CD4-positive, alpha-beta memory T cell (primary cell): ENCODE measurements at regions of chr17 and their contacts with region 1.

Region 1: GRCh38 chr17:19992803-19993713 is 15.4 kb upstream of the AKAP10 start:
- DNase-seq: peak; percentile 74 to 77 (median 75)
- H3K4me3 ChIP-seq: no peak overlapping the region
- H3K4me3 Mint-ChIP-seq: peak overlapping the region in 2 of 8 donors; percentile 25 to 55
- H3K27ac ChIP-seq: no peak overlapping the region
- H3K27ac Mint-ChIP-seq: peak overlapping the region in 3 of 7 donors; percentile 4 to 51 (median 29)
- H3K4me1 ChIP-seq: peaks cover 3% of the 10 kb centered on the region
- H3K4me1 Mint-ChIP-seq: peaks cover 2 to 6% (median 4%) of the 10 kb centered on the region in 4 donors
- H3K27me3 ChIP-seq: no peaks in the 10 kb centered on the region
- H3K27me3 Mint-ChIP-seq: peaks cover 9 to 10% of the 10 kb centered on the region in 2 donors

Region 2: DNA sequence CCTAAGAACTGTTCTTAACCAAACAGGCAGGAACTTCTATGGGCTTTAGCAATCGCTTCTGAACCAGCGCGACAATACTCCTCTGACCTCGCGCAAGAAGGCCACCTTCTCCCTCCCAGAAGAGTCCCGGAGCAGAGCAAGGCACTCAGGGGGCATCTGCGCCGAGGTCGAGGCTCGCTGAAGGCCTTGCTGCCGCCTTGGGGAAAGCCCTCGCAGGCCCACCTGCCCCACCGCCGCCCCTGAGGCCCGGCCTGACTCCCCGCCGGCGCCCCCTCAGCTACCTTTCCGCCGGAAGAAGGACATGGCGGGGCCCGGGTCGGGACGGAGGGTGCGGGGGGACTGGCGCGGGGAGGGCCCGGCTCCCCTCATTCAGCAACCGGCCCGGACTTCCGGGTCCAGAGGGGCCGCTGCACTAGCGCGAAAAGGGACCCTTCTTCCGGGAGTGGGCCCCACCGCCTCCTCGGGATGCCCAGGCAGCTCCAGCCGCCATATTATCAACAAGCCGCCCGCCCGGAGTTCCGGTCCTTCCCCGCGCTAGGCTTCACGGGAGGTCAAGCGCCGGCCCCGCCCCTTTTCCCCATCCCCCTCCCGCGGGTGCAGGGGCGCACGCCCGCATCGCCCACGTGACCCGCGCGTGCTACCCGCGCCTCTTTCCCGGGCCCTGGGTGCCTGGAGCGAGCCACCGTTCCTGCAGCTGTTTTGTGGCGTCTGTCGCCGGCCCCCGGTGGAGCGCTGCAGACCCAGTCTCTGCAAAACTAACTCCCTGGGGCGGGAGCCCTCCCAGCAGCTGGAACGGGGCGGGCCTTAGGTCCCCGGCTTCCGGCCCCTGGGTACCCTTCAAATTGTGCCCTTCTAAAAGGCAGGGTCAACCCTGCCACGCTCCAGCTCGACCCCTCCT is 15.5 kb before region 1 on chr17 and contains the start of gene AKAP10:
- CTCF ChIA-PET with region 1: interaction called, 12 read pairs
- POLR2A ChIA-PET with region 1: interaction called, 4 read pairs
- intact Hi-C with region 1: no loop called
- DNase-seq: peak; percentile 86 to 91 (median 88)
- H3K4me3 ChIP-seq: peak within 1 kb of the TSS; percentile 71 to 87
- H3K4me3 Mint-ChIP-seq: peak within 1 kb of the TSS; percentile 94 to 99 (median 96)
- H3K27ac ChIP-seq: peak within 1 kb of the TSS; percentile 93
- H3K27ac Mint-ChIP-seq: peak within 1 kb of the TSS; percentile 95 to 98 (median 97)
- H3K4me1 ChIP-seq: peaks cover 49% of the 10 kb centered on the region
- H3K4me1 Mint-ChIP-seq: peaks cover 29 to 55% (median 44%) of the 10 kb centered on the region in 4 donors
- H3K27me3 ChIP-seq: no peaks in the 10 kb centered on the region
- H3K27me3 Mint-ChIP-seq: no peaks in the 10 kb centered on the region
- total RNA-seq, gene AKAP10: 58.3 to 72.1 TPM

Region 3: DNA sequence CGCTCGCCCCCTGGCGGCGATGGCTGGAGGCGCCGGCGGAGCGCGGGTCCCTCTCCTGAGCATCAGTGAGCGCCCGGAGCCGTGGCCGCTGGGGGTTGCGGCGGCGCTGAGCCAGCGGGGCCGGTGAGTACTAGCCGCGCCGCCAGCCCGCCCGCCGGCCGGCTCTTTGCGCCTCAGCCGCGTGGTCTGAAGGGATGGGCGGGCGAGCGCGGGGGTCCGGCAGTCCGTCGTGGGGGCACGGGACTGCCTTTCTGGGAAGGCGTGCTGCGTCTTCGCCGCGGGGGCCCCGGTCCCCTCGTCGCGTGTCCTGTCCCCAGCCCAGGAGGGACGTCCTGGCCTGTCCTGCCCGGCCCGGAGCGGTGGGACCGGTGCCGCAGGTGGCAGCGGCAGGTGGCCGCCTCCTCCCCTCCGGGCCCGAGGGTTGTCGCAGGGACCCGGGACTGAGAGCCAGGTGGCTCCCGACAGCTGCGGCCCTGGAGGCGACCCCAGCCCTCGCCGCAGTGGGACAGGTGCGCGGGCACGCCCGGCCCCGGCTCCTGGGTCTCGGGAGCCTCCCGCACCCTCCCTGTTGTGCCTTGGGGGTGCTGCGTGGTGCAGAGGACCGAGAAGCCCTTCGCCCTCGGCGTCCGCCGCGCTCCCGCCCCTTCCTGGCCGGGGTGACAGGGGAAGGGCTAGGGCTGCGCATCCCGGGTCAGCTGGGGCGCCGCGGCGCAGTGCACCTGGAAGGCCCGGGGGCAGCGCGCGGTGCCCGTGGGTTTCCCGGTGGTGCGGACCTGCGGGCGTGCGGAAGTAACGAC is 16.4 kb after region 1 on chr17 and contains the start of gene SPECC1:
- CTCF ChIA-PET with region 1: interaction called, 73 read pairs
- POLR2A ChIA-PET with region 1: interaction called, 4 read pairs
- intact Hi-C with region 1: loop called (anchors 1 kb)
- DNase-seq: peak; percentile 78 to 91 (median 85)
- H3K4me3 ChIP-seq: peak within 1 kb of the TSS; percentile 65 to 66
- H3K4me3 Mint-ChIP-seq: peak within 1 kb of the TSS; percentile 91 to 98 (median 93)
- H3K27ac ChIP-seq: peak within 1 kb of the TSS; percentile 33
- H3K27ac Mint-ChIP-seq: peak within 1 kb of the TSS; percentile 29 to 92 (median 84)
- H3K4me1 ChIP-seq: peaks cover 14% of the 10 kb centered on the region
- H3K4me1 Mint-ChIP-seq: peaks cover 9 to 17% (median 10%) of the 10 kb centered on the region in 4 donors
- H3K27me3 ChIP-seq: peaks cover 7% of the 10 kb centered on the region
- H3K27me3 Mint-ChIP-seq: peaks cover 19 to 24% of the 10 kb centered on the region in 2 donors
- total RNA-seq, gene SPECC1: 12.8 to 13.4 TPM

Region 4: DNA sequence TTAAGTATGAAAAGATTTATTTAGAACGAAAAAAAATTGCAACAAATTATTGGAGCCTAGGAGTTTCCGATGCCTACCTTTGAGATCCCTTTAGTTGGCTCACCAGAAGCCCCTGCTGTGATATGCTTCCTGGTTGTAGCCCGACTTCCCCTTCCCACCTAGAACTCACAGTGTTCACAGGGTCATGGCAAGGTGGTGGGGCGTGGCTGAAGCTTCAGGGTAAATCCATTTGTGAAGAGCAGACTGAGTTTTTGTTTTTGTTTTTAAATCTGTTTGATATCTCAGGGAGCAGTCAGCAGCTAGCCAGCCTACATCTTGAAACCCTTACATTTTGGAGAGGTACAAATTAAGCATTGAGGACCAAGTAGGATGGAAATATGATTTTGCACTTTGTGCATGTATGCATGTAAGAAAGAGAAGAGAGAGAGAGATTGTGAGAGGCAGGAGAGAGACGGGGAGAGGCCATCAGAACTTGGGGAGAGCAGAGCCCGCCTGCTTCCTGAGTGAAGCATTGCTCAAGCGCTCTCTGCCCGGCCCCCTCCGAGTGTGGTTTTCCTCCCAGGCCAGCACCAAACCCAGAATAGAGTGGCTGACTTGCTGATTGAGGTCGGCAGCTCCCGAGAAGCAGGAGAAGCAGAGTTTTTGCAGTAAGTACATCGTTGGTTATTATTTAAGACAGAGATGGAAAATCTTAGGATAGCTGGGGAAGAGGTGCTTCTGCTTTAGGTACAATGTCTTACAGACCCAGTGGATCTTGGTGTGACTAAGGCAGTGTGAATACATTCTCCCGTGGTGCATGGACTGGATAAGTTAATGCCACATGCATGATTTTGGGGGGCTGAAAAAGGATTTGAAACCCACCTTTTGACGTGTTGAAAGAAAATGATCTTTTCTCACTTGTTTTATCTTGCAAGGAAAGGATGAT is 80.3 kb after region 1 on chr17:
- CTCF ChIA-PET with region 1: interaction called, 14 read pairs
- POLR2A ChIA-PET with region 1: no interaction called
- intact Hi-C with region 1: no loop called
- DNase-seq: peak; percentile 18 to 61 (median 30)
- H3K4me3 ChIP-seq: peak overlapping the region in 1 of 2 donors; percentile 19
- H3K4me3 Mint-ChIP-seq: peak overlapping the region; percentile 72 to 87 (median 79)
- H3K27ac ChIP-seq: peak overlapping the region; percentile 6
- H3K27ac Mint-ChIP-seq: peak overlapping the region; percentile 3 to 86 (median 74)
- H3K4me1 ChIP-seq: peaks cover 27% of the 10 kb centered on the region
- H3K4me1 Mint-ChIP-seq: peaks cover 17 to 30% (median 21%) of the 10 kb centered on the region in 4 donors
- H3K27me3 ChIP-seq: no peaks in the 10 kb centered on the region
- H3K27me3 Mint-ChIP-seq: no peaks in the 10 kb centered on the region

Region 5: DNA sequence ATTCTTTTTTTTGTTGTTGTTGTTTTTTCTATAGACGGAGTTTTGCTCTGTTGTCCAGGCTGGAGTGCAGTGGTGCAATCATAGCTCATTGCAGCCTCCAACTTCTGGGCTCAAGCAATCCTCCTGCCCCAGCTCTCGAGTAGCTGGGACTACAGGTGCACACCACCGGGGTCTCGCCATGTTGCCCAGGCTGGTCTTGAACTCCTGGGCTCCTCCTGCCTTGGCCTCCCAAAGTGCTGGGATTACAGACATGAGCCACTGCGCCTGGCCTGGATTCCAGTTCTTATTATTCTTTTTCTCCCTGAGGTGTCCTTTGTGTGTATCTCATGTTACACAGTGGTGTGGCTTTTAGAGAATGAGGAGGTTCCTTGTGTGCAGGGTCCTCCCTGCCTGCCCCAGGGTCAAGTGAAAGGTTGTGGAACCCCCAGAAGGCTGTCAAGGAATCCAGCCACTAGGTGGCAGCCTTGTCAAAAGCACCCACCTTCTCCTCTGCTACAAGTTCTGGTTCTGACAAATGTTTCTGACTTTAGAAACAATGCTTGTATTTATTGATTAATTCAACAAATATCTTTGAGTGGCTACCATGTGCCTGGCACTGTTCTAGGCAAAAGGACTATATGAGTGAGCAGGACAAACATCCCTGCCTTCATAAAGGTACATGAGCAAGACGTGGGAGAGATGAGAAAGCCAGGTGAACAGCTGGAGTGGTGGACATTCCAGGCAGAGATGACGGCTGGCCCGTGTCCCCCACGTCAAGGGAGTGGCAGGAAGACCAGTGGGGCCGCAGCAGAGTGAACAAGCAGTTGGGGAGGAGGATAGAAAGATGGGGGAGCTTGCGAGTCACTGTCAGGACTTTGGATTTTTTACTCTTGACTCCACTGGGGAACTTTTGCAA is 128.5 kb after region 1 on chr17:
- CTCF ChIA-PET with region 1: interaction called, 75 read pairs
- POLR2A ChIA-PET with region 1: no interaction called
- intact Hi-C with region 1: loop called (anchors 1 kb)
- DNase-seq: peak; percentile 51 to 64 (median 58)
- H3K4me3 ChIP-seq: no peak overlapping the region
- H3K4me3 Mint-ChIP-seq: no peak overlapping the region
- H3K27ac ChIP-seq: no peak overlapping the region
- H3K27ac Mint-ChIP-seq: no peak overlapping the region
- H3K4me1 ChIP-seq: no peaks in the 10 kb centered on the region
- H3K4me1 Mint-ChIP-seq: peaks cover 2 to 5% (median 3%) of the 10 kb centered on the region in 4 donors
- H3K27me3 ChIP-seq: no peaks in the 10 kb centered on the region
- H3K27me3 Mint-ChIP-seq: peaks cover 3 to 5% of the 10 kb centered on the region in 2 donors

Region 6: DNA sequence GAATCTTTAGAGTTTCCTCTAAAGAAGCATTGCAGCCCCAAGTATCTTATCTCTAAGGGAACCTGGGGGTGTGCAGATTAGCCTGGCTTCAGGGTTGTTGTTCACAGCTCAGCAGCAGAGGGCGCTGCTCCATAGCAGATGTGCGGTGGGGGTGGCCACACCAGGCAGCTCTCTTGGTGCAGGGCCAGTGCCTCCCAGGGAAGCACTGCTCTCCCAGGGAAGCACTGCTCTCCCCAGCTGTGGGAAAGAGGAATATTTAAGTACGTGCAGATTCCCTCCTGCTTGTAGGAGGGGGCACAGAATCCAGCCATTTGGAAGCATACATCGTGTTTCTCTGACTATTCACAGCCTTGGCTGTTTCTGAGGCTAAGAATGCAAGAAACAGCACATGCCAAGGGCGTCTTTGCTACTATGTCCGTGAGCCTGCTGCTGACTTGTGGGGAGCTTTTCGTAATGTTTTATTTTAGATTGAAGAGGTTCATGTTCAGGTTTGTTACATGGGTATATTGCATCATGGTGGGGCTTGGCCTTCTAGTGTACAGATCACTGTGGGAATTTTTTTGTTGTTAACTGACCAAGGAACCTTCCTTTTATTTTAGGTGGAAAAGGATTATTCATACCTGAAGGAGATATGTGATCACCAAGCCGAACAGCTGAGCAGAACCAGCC is 233.9 kb after region 1 on chr17:
- CTCF ChIA-PET with region 1: interaction called, 4 read pairs
- POLR2A ChIA-PET with region 1: no interaction called
- intact Hi-C with region 1: loop called (anchors 2 kb)
- DNase-seq: peak; percentile 60 to 69 (median 67)
- H3K4me3 ChIP-seq: no peak overlapping the region
- H3K4me3 Mint-ChIP-seq: no peak overlapping the region
- H3K27ac ChIP-seq: no peak overlapping the region
- H3K27ac Mint-ChIP-seq: peak overlapping the region in 1 of 7 donors; percentile 23
- H3K4me1 ChIP-seq: no peaks in the 10 kb centered on the region
- H3K4me1 Mint-ChIP-seq: peaks cover 5 to 8% (median 6%) of the 10 kb centered on the region in 4 donors
- H3K27me3 ChIP-seq: no peaks in the 10 kb centered on the region
- H3K27me3 Mint-ChIP-seq: no peaks in the 10 kb centered on the region

Region 7: GRCh38 chr17:20315821-20316220 is 322.8 kb after region 1 on chr17:
- CTCF ChIA-PET with region 1: interaction called, 3 read pairs
- POLR2A ChIA-PET with region 1: no interaction called
- intact Hi-C with region 1: loop called (anchors 2 kb)
- DNase-seq: no peak
- H3K4me3 ChIP-seq: no peak overlapping the region
- H3K4me3 Mint-ChIP-seq: no peak overlapping the region
- H3K27ac ChIP-seq: no peak overlapping the region
- H3K27ac Mint-ChIP-seq: no peak overlapping the region
- H3K4me1 ChIP-seq: no peaks in the 10 kb centered on the region
- H3K4me1 Mint-ChIP-seq: peaks cover 0 to under 1% (median 0%) of the 10 kb centered on the region in 4 donors
- H3K27me3 ChIP-seq: no peaks in the 10 kb centered on the region
- H3K27me3 Mint-ChIP-seq: no peaks in the 10 kb centered on the region